Activated naive CD4-positive, alpha-beta T cell treated with anti-CD3 and anti-CD28 coated beads for 36 hours (primary cell): ENCODE measurements at regions of chr15 and their contacts with region 1.

Region 1: GRCh38 chr15:24956111-24956838 is 1.5 kb downstream of the SNRPN start:
- DNase-seq: peak; percentile 78
- H3K4me3 Mint-ChIP-seq: peak overlapping the region; percentile 89
- H3K27ac Mint-ChIP-seq: peak overlapping the region; percentile 95
- H3K4me1 Mint-ChIP-seq: peaks cover 12% of the 10 kb centered on the region
- H3K27me3 Mint-ChIP-seq: no peaks in the 10 kb centered on the region

Region 2: GRCh38 chr15:24772686-24773373 is 183.4 kb before region 1 on chr15:
- CTCF ChIA-PET with region 1: no interaction called
- intact Hi-C with region 1: loop called (anchors 1 kb)
- DNase-seq: peak; percentile 80
- H3K4me3 Mint-ChIP-seq: peak overlapping the region; percentile 79
- H3K27ac Mint-ChIP-seq: peak overlapping the region; percentile 53
- H3K4me1 Mint-ChIP-seq: peaks cover 2% of the 10 kb centered on the region
- H3K27me3 Mint-ChIP-seq: peaks cover 3% of the 10 kb centered on the region

Region 3: GRCh38 chr15:24819680-24820079 is 136.6 kb before region 1 on chr15:
- CTCF ChIA-PET with region 1: no interaction called
- intact Hi-C with region 1: no loop called
- DNase-seq: no peak
- H3K4me3 Mint-ChIP-seq: no peak overlapping the region
- H3K27ac Mint-ChIP-seq: no peak overlapping the region
- H3K4me1 Mint-ChIP-seq: no peaks in the 10 kb centered on the region
- H3K27me3 Mint-ChIP-seq: no peaks in the 10 kb centered on the region

Region 4: DNA sequence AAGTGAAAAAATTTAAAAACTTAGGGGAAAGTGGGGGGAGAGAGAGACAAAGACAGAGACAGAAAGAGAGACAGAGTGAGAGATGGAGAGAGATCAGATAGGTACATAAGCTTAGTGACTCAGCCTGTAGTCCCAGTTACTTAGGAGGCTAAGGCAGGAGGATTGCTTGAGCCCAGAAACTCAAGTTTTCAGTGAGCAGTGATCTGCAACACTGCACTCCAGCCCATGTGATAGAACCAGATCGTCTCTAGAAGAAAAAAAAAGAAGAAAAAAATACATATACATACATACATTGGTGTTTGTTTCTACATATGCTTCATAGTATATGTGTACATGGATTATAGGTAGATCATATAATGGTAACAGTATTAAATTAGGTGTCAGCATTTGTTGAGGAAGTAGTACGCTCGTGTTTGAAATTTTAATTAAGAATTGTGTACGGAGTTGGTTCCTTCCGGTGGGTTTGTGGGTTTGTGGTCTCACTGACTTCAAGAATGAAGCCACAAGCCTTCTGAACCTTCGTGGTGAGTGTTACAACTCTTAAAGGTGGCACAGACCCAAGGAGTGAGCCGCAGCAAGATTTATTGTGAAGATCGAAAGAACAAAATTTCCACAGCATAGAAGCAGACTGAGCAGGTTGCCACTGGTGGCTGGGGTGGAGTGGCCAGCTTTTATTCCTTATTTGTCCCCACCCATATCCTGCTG is 39.8 kb before region 1 on chr15:
- CTCF ChIA-PET with region 1: no interaction called
- intact Hi-C with region 1: no loop called
- DNase-seq: no peak
- H3K4me3 Mint-ChIP-seq: no peak overlapping the region
- H3K27ac Mint-ChIP-seq: no peak overlapping the region
- H3K4me1 Mint-ChIP-seq: peaks cover 4% of the 10 kb centered on the region
- H3K27me3 Mint-ChIP-seq: no peaks in the 10 kb centered on the region

Region 5: GRCh38 chr15:24944954-24945353 is 11.3 kb before region 1 on chr15:
- CTCF ChIA-PET with region 1: no interaction called
- intact Hi-C with region 1: no loop called
- DNase-seq: no peak
- H3K4me3 Mint-ChIP-seq: no peak overlapping the region
- H3K27ac Mint-ChIP-seq: no peak overlapping the region
- H3K4me1 Mint-ChIP-seq: no peaks in the 10 kb centered on the region
- H3K27me3 Mint-ChIP-seq: no peaks in the 10 kb centered on the region

Region 6: GRCh38 chr15:26082221-26083109 is 1126.2 kb after region 1 on chr15:
- CTCF ChIA-PET with region 1: no interaction called
- intact Hi-C with region 1: loop called (anchors 2 kb)
- DNase-seq: peak; percentile 96
- H3K4me3 Mint-ChIP-seq: peak overlapping the region; percentile 83
- H3K27ac Mint-ChIP-seq: peak overlapping the region; percentile 92
- H3K4me1 Mint-ChIP-seq: peaks cover 29% of the 10 kb centered on the region
- H3K27me3 Mint-ChIP-seq: peaks cover 2% of the 10 kb centered on the region